ENCODE measurements at regions of chr7 and their contacts with region 1.

Region 1: GRCh38 chr7:136009488-136010079 is 32.4 kb upstream of the MTPN start:
- DNase-seq: peak; percentile 58
- ATAC-seq: peak; percentile 79
- H3K4me3 ChIP-seq: no peak overlapping the region
- H3K27ac ChIP-seq: no peak overlapping the region
- H3K4me1 ChIP-seq: no peaks in the 10 kb centered on the region
- H3K27me3 ChIP-seq: no peaks in the 10 kb centered on the region; the same call in 1 of the 2 replicates
- CTCF ChIP-seq: peak; percentile 79
- POLR2A ChIP-seq: no peak
- RAD21 ChIP-seq: peak; percentile 85

Region 2: GRCh38 chr7:135170274-135170997 is 839.1 kb before region 1 on chr7 and contains the start of gene CYREN:
- CTCF ChIA-PET with region 1: no interaction called
- POLR2A ChIA-PET with region 1: no interaction called
- dilution Hi-C with region 1: no loop called
- in situ Hi-C with region 1: no loop called
- intact Hi-C with region 1: no loop called
- DNase-seq: peak; percentile 93
- ATAC-seq: peak; percentile 94
- H3K4me3 ChIP-seq: peak within 1 kb of the TSS; percentile 91
- H3K27ac ChIP-seq: peak within 1 kb of the TSS; percentile 96
- H3K4me1 ChIP-seq: peaks cover 12% of the 10 kb centered on the region
- H3K27me3 ChIP-seq: no peaks in the 10 kb centered on the region
- CTCF ChIP-seq: peak; percentile 83
- POLR2A ChIP-seq: peak; percentile 75
- RAD21 ChIP-seq: peak; percentile 75
- total RNA-seq, gene CYREN: 26.5 and 33.1 TPM in 2 replicates

Region 3: DNA sequence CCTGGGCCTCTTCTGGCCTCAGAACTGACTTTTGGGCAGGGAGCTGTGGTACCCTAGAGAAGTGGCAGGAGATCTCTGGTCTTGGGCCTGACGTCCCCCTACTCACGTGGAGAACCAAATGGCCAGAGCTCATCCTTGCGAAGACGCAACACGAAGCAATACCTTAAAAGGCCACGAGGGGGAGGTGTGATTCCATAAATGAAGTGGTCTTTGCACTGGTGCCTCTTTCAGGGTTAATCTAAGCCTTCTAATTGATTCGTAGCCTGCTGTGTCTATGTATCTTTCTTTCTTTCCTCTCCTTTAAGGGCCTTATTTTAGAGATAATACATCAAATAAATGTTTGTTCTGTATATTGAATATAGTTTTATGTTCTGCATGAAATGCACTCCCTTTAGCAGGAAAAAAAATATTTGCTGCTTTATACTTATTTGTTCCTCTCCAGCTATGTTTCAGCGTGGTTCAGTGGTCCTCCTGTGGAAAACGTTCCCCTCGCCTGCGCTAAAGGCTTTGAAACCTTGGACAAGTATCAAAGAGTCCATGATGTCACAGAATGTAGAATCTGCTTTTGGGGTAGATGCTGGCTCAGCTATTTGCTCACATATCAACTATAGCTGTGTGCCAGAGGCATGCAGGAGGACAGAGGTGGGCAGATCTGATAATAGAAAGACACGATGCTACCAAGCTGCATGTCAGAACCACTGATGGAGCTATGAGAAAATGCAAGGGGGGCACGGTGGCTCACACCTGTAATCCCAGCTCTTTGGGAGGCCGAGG is 734.9 kb before region 1 on chr7:
- CTCF ChIA-PET with region 1: no interaction called
- POLR2A ChIA-PET with region 1: no interaction called
- dilution Hi-C with region 1: no loop called
- in situ Hi-C with region 1: loop called (anchors 25 kb)
- intact Hi-C with region 1: loop called (anchors 2 kb)
- DNase-seq: peak; percentile 73
- ATAC-seq: peak; percentile 99
- H3K4me3 ChIP-seq: no peak overlapping the region
- H3K27ac ChIP-seq: no peak overlapping the region
- H3K4me1 ChIP-seq: no peaks in the 10 kb centered on the region
- H3K27me3 ChIP-seq: peaks cover 13% of the 10 kb centered on the region
- CTCF ChIP-seq: peak; percentile 79
- POLR2A ChIP-seq: no peak
- RAD21 ChIP-seq: peak; percentile 79

Region 4: DNA sequence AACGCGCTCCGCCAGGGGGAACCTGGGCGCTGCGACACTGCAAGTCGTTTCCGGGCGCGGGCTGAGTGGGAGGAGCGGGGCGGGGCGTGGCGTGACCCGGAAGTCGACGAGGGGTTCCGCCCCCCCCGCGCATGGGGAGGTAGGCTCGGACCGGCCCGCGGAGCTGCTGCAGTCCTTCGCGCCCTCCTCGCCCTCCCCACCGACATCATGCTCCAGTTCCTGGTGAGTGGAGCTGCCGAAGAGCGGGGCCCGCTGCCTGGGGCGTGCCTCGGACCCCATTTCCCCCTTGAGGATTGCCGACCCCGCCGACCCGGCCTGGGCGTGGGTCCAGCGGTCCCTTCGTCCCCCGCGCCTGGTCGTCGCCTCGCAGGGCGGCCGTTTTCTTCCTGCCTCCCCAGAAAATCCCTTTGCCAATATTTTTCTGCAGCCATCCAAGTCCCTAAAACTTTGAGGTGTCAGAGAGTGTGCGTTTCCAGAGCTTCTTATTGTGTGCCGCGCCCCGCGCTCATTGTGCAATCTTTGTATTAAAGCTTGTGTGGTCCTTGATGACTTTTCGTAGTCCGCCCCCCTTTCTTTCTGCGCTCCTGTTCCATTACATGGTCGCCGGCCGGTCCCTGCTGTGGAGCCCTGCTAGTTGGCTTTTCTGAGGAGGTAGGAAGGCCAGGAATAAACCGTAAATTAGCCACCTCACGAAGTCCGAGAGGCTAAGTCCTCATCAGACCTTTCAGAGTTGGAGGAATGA is 347.0 kb before region 1 on chr7 and contains the start of gene STMP1:
- CTCF ChIA-PET with region 1: no interaction called
- POLR2A ChIA-PET with region 1: no interaction called
- dilution Hi-C with region 1: no loop called
- in situ Hi-C with region 1: loop called (anchors 5 kb)
- intact Hi-C with region 1: no loop called
- DNase-seq: peak; percentile 96
- ATAC-seq: peak; percentile 93
- H3K4me3 ChIP-seq: peak within 1 kb of the TSS; percentile 84
- H3K27ac ChIP-seq: peak within 1 kb of the TSS; percentile 100
- H3K4me1 ChIP-seq: peaks cover 9% of the 10 kb centered on the region
- H3K27me3 ChIP-seq: no peaks in the 10 kb centered on the region
- CTCF ChIP-seq: peak; percentile 80
- POLR2A ChIP-seq: peak; percentile 94
- RAD21 ChIP-seq: peak; percentile 68
- total RNA-seq, gene STMP1: 6.1 and 11.9 TPM in 2 replicates

Region 5: DNA sequence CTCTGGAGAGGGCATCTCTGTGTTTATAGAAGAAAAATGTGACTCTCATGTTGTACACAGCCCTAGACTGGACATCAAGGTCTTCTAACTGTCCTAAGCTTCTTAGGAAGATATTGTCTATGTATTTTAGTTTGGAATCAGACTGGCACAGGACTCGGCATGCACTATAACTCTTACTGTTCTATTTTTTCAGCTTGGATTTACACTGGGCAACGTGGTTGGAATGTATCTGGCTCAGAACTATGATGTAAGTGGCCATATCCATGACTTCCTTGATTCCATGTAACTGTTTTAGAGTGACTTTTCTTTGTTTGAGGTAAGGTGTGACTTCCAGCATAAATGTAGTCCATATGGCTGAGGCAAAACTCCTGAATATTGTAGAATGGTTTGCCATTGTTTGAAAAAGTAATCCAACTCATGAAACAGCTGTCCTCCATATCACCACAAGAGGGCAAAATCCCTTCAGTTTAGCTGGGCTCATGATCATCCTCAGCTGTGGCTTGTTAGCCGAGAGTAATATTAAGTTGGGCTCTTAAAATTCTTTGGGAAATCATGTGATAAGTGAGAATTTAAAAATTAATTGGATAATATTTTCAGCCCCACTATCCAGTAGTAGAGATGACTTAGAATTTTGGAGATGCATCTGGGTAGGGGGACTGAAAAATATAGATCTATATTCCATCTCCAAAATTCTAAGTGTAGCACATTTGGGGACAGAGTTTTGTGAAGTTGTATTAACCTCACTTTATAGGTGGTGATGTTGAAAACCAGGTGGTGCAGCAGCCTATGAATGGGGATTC is 336.8 kb before region 1 on chr7:
- CTCF ChIA-PET with region 1: no interaction called
- POLR2A ChIA-PET with region 1: no interaction called
- dilution Hi-C with region 1: no loop called
- in situ Hi-C with region 1: loop called (anchors 5 kb)
- intact Hi-C with region 1: loop called (anchors 1 kb)
- DNase-seq: peak; percentile 84
- ATAC-seq: peak; percentile 71
- H3K4me3 ChIP-seq: no peak overlapping the region
- H3K27ac ChIP-seq: no peak overlapping the region
- H3K4me1 ChIP-seq: peaks cover 9% of the 10 kb centered on the region
- H3K27me3 ChIP-seq: no peaks in the 10 kb centered on the region
- CTCF ChIP-seq: peak; percentile 88
- POLR2A ChIP-seq: no peak
- RAD21 ChIP-seq: peak; percentile 91

Region 6: DNA sequence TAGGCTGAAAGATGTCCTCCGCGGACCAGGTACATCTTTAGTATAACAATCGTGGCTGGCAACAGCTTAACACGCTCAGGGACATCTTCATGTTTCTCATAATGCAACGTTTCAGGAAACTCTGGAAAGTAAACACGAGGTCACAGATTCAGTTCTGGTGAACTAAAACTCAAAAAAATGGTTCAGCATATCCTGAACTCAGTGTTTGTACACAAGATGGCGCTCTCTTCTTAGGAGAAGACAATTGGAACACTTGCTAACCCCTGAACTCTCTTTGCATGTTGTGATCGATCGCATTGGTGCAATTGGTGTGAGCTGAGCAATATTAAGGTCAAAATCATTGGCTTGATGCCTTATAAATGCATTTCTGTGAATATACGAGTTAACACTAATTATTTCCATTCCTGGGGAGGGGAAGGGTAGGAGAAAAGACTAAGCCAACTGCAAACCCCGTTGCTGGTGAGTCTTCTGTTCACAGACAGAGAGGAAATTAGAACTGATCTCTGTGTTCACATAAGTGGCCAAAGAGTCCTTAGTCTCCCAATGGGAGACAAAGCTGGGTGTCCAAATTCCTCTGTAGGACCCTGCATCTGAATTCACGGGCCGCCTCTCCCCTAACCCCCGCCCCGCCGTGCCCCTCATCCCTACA is 208.4 kb before region 1 on chr7:
- CTCF ChIA-PET with region 1: interaction called, 27 read pairs
- POLR2A ChIA-PET with region 1: no interaction called
- dilution Hi-C with region 1: no loop called
- in situ Hi-C with region 1: loop called (anchors 5 kb)
- intact Hi-C with region 1: loop called (anchors 1 kb)
- DNase-seq: peak; percentile 74
- ATAC-seq: peak; percentile 81
- H3K4me3 ChIP-seq: no peak overlapping the region
- H3K27ac ChIP-seq: no peak overlapping the region
- H3K4me1 ChIP-seq: peaks cover 2% of the 10 kb centered on the region; the same call in 1 of the 2 replicates
- H3K27me3 ChIP-seq: no peaks in the 10 kb centered on the region
- CTCF ChIP-seq: peak; percentile 90
- POLR2A ChIP-seq: no peak
- RAD21 ChIP-seq: peak; percentile 97

Region 7: DNA sequence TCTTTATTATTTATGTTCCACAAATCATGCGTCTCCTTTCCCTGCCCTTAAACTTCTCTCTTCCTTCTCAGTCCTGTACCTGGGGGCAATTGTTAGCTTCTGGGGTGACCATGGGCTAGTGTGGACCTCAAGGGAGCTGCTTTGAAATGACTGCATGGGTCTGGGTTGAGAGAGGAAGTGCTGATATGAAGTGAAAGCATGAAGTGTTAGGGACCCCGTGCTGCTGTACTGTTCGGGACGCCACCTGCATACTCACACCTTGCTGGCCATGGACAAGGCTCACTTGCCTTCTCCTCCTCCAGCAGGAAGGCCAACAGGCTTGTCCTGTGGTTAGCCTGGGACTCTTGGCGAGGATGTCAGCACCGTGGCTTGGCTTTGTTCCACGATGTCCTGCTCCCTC is 89.1 kb before region 1 on chr7:
- CTCF ChIA-PET with region 1: no interaction called
- POLR2A ChIA-PET with region 1: no interaction called
- dilution Hi-C with region 1: no loop called
- in situ Hi-C with region 1: no loop called
- intact Hi-C with region 1: loop called (anchors 5 kb)
- DNase-seq: no peak
- ATAC-seq: no peak
- H3K4me3 ChIP-seq: no peak overlapping the region
- H3K27ac ChIP-seq: no peak overlapping the region
- H3K4me1 ChIP-seq: peaks cover 3% of the 10 kb centered on the region
- H3K27me3 ChIP-seq: no peaks in the 10 kb centered on the region
- CTCF ChIP-seq: no peak
- POLR2A ChIP-seq: no peak
- RAD21 ChIP-seq: no peak

Region 8: DNA sequence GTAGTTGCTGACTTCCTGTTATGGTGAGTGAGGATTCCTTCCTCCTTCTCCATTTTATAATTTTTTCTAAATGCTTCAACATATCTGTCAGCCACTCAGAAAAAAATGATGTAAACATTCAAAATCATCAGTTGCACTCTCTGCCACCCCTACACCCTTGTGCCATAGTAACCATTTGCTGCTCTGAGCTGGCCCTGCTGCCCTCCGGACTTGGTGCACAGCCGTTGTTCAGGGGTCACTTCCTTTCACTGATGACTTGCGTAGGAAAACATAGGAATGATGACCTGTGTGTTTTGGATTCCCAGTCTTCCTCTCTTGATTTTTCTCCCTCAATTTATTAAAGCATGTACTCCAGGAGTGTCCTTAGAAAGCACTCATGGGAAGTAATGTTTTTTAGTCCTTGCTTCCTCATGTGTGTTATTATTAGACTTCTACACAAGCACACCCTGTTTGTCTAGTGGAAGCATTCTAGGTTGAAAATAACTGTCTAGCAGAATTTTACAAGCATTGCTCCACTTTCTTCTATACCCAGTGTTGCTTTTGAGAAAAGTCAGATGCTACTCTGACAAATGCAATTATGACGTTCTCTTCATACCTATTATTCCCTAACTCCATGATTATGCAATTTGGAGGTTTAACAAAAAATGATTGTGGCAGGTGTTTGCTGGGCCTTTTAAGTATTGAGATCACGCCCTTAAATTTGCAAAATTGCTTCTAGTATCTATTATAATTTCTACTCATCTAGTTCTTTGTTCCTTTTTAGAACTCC is 30.2 kb after region 1 on chr7:
- CTCF ChIA-PET with region 1: no interaction called
- POLR2A ChIA-PET with region 1: no interaction called
- dilution Hi-C with region 1: no loop called
- in situ Hi-C with region 1: no loop called
- intact Hi-C with region 1: no loop called
- DNase-seq: no peak
- ATAC-seq: no peak
- H3K4me3 ChIP-seq: no peak overlapping the region
- H3K27ac ChIP-seq: no peak overlapping the region
- H3K4me1 ChIP-seq: no peaks in the 10 kb centered on the region
- H3K27me3 ChIP-seq: no peaks in the 10 kb centered on the region
- CTCF ChIP-seq: no peak
- POLR2A ChIP-seq: no peak
- RAD21 ChIP-seq: no peak

Region 9: GRCh38 chr7:136150311-136150710 is 140.7 kb after region 1 on chr7:
- CTCF ChIA-PET with region 1: no interaction called
- POLR2A ChIA-PET with region 1: no interaction called
- dilution Hi-C with region 1: no loop called
- in situ Hi-C with region 1: no loop called
- intact Hi-C with region 1: no loop called
- DNase-seq: no peak
- ATAC-seq: no peak
- H3K4me3 ChIP-seq: no peak overlapping the region
- H3K27ac ChIP-seq: no peak overlapping the region
- H3K4me1 ChIP-seq: no peaks in the 10 kb centered on the region
- H3K27me3 ChIP-seq: no peaks in the 10 kb centered on the region
- CTCF ChIP-seq: no peak
- POLR2A ChIP-seq: no peak
- RAD21 ChIP-seq: no peak

Measured in IMR-90 (cell line).